ENCODE measurements at regions of chr2 and their contacts with region 1.

Region 1: GRCh38 chr2:33372940-33373553 is 103.4 kb upstream of the RASGRP3 start:
- DNase-seq: peak; percentile 81
- H3K4me3 ChIP-seq: no peak overlapping the region
- H3K27ac ChIP-seq: no peak overlapping the region
- H3K4me1 ChIP-seq: peaks cover 6% of the 10 kb centered on the region
- H3K27me3 ChIP-seq: no peaks in the 10 kb centered on the region
- CTCF ChIP-seq: peak; percentile 48 to 55
- POLR2A ChIP-seq: no peak

Region 2: DNA sequence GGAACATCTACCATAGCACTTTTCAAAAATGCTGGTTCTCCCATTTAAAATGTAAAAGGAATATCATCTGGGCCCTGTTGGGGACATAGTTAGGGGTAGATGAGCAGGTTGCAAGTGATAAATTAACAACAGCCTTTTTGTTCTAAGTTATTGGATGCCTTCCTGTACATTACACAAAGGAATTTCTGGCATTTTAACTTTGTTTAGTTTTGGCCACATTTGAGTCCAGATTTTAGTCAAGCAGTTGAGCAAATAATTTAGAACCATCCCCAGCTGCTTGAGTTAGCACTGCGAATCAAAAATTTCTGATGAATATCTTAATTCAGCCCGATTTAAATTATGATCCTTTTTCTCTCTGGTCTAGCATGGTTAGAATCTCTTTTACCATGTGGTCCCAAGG is 620.8 kb before region 1 on chr2:
- CTCF ChIA-PET with region 1: no interaction called
- POLR2A ChIA-PET with region 1: no interaction called
- dilution Hi-C with region 1: no loop called
- intact Hi-C with region 1: no loop called
- DNase-seq: no peak
- H3K4me3 ChIP-seq: no peak overlapping the region
- H3K27ac ChIP-seq: no peak overlapping the region
- H3K4me1 ChIP-seq: peaks cover 2% of the 10 kb centered on the region
- H3K27me3 ChIP-seq: no peaks in the 10 kb centered on the region
- CTCF ChIP-seq: no peak
- POLR2A ChIP-seq: no peak

Region 3: GRCh38 chr2:32772638-32773447 is 600.2 kb before region 1 on chr2:
- CTCF ChIA-PET with region 1: interaction called, 4 read pairs
- POLR2A ChIA-PET with region 1: no interaction called
- dilution Hi-C with region 1: no loop called
- intact Hi-C with region 1: loop called (anchors 1 kb)
- DNase-seq: peak; percentile 75
- H3K4me3 ChIP-seq: no peak overlapping the region
- H3K27ac ChIP-seq: no peak overlapping the region
- H3K4me1 ChIP-seq: peaks cover 3% of the 10 kb centered on the region
- H3K27me3 ChIP-seq: no peaks in the 10 kb centered on the region
- CTCF ChIP-seq: peak; percentile 38 to 53
- POLR2A ChIP-seq: no peak

Region 4: DNA sequence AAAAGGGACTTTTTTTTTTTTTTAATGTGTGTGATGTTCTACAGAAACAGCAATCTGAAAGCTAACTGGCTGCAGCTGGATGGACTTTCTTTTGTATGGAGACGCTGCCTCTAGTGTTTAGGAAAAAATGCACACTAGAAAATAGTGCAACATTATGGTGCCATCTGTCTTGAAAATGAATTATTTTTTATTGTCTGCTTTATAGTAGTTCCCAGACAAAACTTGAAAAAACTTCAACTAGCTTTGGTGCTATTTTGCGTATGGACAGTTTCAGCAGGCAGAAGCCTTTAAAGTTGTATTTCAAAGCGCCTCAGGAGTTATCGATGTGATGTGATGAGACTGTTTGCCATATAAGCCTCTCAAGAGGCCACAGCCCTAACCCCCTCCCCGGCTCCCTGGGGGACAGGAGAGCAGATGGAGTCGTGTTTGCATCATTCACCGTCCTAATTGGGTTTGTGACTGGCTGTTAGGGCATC is 339.4 kb before region 1 on chr2:
- CTCF ChIA-PET with region 1: interaction called, 19 read pairs
- POLR2A ChIA-PET with region 1: no interaction called
- dilution Hi-C with region 1: no loop called
- intact Hi-C with region 1: loop called (anchors 5 kb)
- DNase-seq: peak; percentile 67
- H3K4me3 ChIP-seq: no peak overlapping the region
- H3K27ac ChIP-seq: no peak overlapping the region
- H3K4me1 ChIP-seq: peaks cover 15% of the 10 kb centered on the region
- H3K27me3 ChIP-seq: no peaks in the 10 kb centered on the region
- CTCF ChIP-seq: peak; percentile 13 to 46
- POLR2A ChIP-seq: no peak

Region 5: GRCh38 chr2:33342171-33342570 is 30.9 kb before region 1 on chr2:
- CTCF ChIA-PET with region 1: interaction called, 4 read pairs
- POLR2A ChIA-PET with region 1: no interaction called
- dilution Hi-C with region 1: no loop called
- intact Hi-C with region 1: loop called (anchors 1 kb)
- DNase-seq: peak; percentile 98
- H3K4me3 ChIP-seq: no peak overlapping the region
- H3K27ac ChIP-seq: peak overlapping the region; percentile 99
- H3K4me1 ChIP-seq: peaks cover 28% of the 10 kb centered on the region
- H3K27me3 ChIP-seq: no peaks in the 10 kb centered on the region
- CTCF ChIP-seq: no peak
- POLR2A ChIP-seq: peak; percentile 40

Measured in endothelial cell of umbilical vein (primary cell).